IMR-90 (cell line): ENCODE measurements at regions of chr5 and their contacts with region 1.

Region 1: GRCh38 chr5:179304466-179304865 is 40.8 kb downstream of the ADAMTS2 start:
- DNase-seq: peak; percentile 97
- ATAC-seq: peak; percentile 88
- H3K4me3 ChIP-seq: no peak overlapping the region
- H3K27ac ChIP-seq: no peak overlapping the region; the same call in 1 of the 2 replicates
- H3K4me1 ChIP-seq: peaks cover 29% of the 10 kb centered on the region
- H3K27me3 ChIP-seq: no peaks in the 10 kb centered on the region
- CTCF ChIP-seq: no peak
- POLR2A ChIP-seq: no peak
- RAD21 ChIP-seq: no peak; the same call in 1 of the 2 replicates

Region 2: GRCh38 chr5:179275941-179276837 is 28.3 kb before region 1 on chr5:
- CTCF ChIA-PET with region 1: no interaction called
- POLR2A ChIA-PET with region 1: no interaction called
- dilution Hi-C with region 1: no loop called
- in situ Hi-C with region 1: no loop called
- intact Hi-C with region 1: loop called (anchors 1 kb)
- DNase-seq: peak; percentile 98
- ATAC-seq: peak; percentile 83
- H3K4me3 ChIP-seq: no peak overlapping the region
- H3K27ac ChIP-seq: peak overlapping the region; percentile 97
- H3K4me1 ChIP-seq: peaks cover 51% of the 10 kb centered on the region
- H3K27me3 ChIP-seq: no peaks in the 10 kb centered on the region
- CTCF ChIP-seq: no peak
- POLR2A ChIP-seq: peak; percentile 30; the same call in 1 of the 2 replicates
- RAD21 ChIP-seq: peak; percentile 25; the same call in 1 of the 2 replicates

Region 3: GRCh38 chr5:179559284-179560252 is 255.1 kb after region 1 on chr5:
- CTCF ChIA-PET with region 1: no interaction called
- POLR2A ChIA-PET with region 1: no interaction called
- dilution Hi-C with region 1: no loop called
- in situ Hi-C with region 1: no loop called
- intact Hi-C with region 1: loop called (anchors 10 kb)
- DNase-seq: peak; percentile 98
- ATAC-seq: peak; percentile 100
- H3K4me3 ChIP-seq: peak overlapping the region; percentile 50
- H3K27ac ChIP-seq: peak overlapping the region; percentile 61
- H3K4me1 ChIP-seq: peaks cover 3% of the 10 kb centered on the region; the same call in 1 of the 2 replicates
- H3K27me3 ChIP-seq: no peaks in the 10 kb centered on the region
- CTCF ChIP-seq: no peak
- POLR2A ChIP-seq: peak; percentile 89
- RAD21 ChIP-seq: no peak